Endothelial cell of umbilical vein (primary cell): ENCODE measurements at regions of chr6 and their contacts with region 1.

Region 1: DNA sequence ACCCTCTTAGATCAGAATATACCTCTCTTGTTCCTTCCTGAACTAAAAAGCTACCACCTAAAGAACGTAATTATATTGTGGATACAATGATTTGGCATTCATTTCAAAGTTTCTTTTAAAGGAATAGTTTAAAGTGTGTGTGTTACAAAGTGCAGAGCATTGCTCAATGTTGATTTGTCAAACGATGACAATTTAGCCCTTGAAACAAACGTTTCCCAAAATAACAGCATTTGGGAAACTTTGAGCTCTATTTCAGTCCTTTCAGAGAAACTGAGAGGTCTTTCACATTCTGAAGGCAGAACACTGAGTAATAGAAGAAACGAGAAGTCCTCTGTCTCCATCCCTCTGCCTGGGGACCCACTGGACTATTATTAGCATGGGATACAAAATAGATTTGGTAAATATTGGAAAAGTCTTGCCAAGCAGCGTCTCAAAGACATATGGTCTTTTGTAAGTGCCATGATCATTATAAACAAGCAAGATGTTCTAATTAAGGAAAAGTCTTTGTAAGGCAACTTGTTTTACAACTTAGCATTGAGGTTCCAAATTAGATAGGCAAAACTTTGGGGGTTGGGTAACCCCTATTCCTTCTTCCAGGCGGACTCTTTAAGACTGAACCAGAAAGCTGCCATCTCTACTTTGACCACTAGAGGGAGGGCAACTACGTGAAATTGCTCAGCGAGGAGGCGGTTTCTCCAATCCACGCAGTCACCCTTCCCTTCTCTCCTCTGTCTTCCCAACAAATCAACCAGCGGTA is 208.8 kb downstream of the RNF144B start:
- DNase-seq: peak; percentile 69
- H3K4me3 ChIP-seq: no peak overlapping the region
- H3K27ac ChIP-seq: no peak overlapping the region
- H3K4me1 ChIP-seq: no peaks in the 10 kb centered on the region
- H3K27me3 ChIP-seq: peaks cover 1 to 6% of the 10 kb centered on the region in 2 experiments
- CTCF ChIP-seq: peak; percentile 84 to 88
- POLR2A ChIP-seq: no peak

Region 2: GRCh38 chr6:18527836-18528743 is 67.9 kb before region 1 on chr6:
- CTCF ChIA-PET with region 1: interaction called, 17 read pairs
- POLR2A ChIA-PET with region 1: no interaction called
- dilution Hi-C with region 1: no loop called
- intact Hi-C with region 1: loop called (anchors 5 kb)
- DNase-seq: peak; percentile 24
- H3K4me3 ChIP-seq: no peak overlapping the region
- H3K27ac ChIP-seq: no peak overlapping the region
- H3K4me1 ChIP-seq: peaks cover 2% of the 10 kb centered on the region
- H3K27me3 ChIP-seq: peaks cover 1 to 19% of the 10 kb centered on the region in 2 experiments
- CTCF ChIP-seq: no peak
- POLR2A ChIP-seq: no peak

Region 3: GRCh38 chr6:18585032-18585573 is 10.8 kb before region 1 on chr6:
- CTCF ChIA-PET with region 1: interaction called, 14 read pairs
- POLR2A ChIA-PET with region 1: no interaction called
- dilution Hi-C with region 1: no loop called
- intact Hi-C with region 1: no loop called
- DNase-seq: peak; percentile 79
- H3K4me3 ChIP-seq: peak overlapping the region in 1 of 3 experiments; percentile 18
- H3K27ac ChIP-seq: peak overlapping the region; percentile 41
- H3K4me1 ChIP-seq: peaks cover 14% of the 10 kb centered on the region
- H3K27me3 ChIP-seq: no peaks in the 10 kb centered on the region
- CTCF ChIP-seq: no peak
- POLR2A ChIP-seq: no peak

Region 4: GRCh38 chr6:18752278-18753068 is 156.5 kb after region 1 on chr6:
- CTCF ChIA-PET with region 1: interaction called, 4 read pairs
- POLR2A ChIA-PET with region 1: no interaction called
- dilution Hi-C with region 1: no loop called
- intact Hi-C with region 1: loop called (anchors 5 kb)
- DNase-seq: no peak
- H3K4me3 ChIP-seq: no peak overlapping the region
- H3K27ac ChIP-seq: no peak overlapping the region
- H3K4me1 ChIP-seq: no peaks in the 10 kb centered on the region
- H3K27me3 ChIP-seq: no peaks in the 10 kb centered on the region
- CTCF ChIP-seq: no peak
- POLR2A ChIP-seq: no peak

Region 5: DNA sequence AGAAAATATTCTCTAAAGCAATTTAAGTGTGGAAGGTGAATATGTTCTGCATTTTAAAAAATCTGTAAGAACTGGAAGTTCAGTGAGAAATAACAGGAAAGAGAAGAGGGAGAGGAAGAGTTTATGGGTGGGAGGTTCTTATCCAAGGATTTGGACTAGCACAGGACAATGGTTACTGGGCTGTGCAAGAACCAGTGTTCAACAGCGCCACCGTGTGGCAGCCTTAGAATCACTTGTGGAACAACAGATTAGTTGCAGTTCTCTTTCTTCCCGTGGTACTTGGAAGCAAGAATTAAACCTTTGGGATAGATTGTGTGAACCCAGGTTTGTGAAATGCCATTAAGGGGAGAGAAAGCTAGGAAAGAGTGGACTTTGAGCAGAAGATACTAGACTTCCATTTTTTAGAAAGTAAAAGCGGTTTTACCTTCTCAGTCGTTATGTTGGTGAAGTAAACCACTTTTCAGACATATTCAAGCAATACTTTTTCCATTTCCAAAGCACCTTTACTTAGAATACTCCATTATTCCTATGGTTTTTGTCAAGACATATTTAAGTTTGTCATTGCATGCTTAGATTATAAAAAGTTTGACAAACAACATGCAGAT is 227.9 kb after region 1 on chr6:
- CTCF ChIA-PET with region 1: no interaction called
- POLR2A ChIA-PET with region 1: no interaction called
- dilution Hi-C with region 1: no loop called
- intact Hi-C with region 1: loop called (anchors 5 kb)
- DNase-seq: peak; percentile 7
- H3K4me3 ChIP-seq: no peak overlapping the region
- H3K27ac ChIP-seq: no peak overlapping the region
- H3K4me1 ChIP-seq: no peaks in the 10 kb centered on the region
- H3K27me3 ChIP-seq: no peaks in the 10 kb centered on the region
- CTCF ChIP-seq: peak; percentile 44 to 51
- POLR2A ChIP-seq: no peak

Region 6: GRCh38 chr6:20056350-20056992 is 1460.5 kb after region 1 on chr6:
- CTCF ChIA-PET with region 1: interaction called, 58 read pairs
- POLR2A ChIA-PET with region 1: no interaction called
- dilution Hi-C with region 1: no loop called
- intact Hi-C with region 1: loop called (anchors 1 kb)
- DNase-seq: peak; percentile 44
- H3K4me3 ChIP-seq: no peak overlapping the region
- H3K27ac ChIP-seq: no peak overlapping the region
- H3K4me1 ChIP-seq: no peaks in the 10 kb centered on the region
- H3K27me3 ChIP-seq: no peaks in the 10 kb centered on the region
- CTCF ChIP-seq: peak; percentile 19 to 26
- POLR2A ChIP-seq: no peak